ENCODE measurements at regions of chr6 and their contacts with region 1.

Region 1: DNA sequence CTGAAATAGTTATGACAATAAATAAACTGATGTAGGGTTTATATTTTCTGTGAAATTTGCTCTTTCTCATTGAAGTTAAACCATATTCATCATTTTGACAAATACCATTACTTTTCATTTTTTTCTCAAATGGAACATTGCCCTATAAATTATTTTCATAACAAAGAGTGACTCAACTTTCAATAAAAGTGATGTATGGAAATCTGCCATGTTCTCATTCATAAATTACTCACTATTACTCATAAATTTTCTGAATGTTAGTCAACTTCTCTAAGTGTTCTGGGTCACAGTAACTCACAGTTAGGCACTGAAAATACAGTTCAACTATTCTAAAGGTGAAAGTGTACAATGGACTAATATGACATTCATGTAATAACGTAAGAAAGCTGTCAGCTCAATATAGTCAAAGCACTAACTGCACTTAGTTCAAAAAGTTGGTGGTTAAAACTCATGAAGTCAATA is 19.0 kb upstream of the STX11 start:
- DNase-seq: no peak
- H3K4me3 Mint-ChIP-seq: peak overlapping the region; percentile 59
- H3K27ac Mint-ChIP-seq: peak overlapping the region; percentile 74
- H3K4me1 Mint-ChIP-seq: peaks cover 31% of the 10 kb centered on the region
- H3K27me3 Mint-ChIP-seq: peaks cover 3% of the 10 kb centered on the region

Region 2: DNA sequence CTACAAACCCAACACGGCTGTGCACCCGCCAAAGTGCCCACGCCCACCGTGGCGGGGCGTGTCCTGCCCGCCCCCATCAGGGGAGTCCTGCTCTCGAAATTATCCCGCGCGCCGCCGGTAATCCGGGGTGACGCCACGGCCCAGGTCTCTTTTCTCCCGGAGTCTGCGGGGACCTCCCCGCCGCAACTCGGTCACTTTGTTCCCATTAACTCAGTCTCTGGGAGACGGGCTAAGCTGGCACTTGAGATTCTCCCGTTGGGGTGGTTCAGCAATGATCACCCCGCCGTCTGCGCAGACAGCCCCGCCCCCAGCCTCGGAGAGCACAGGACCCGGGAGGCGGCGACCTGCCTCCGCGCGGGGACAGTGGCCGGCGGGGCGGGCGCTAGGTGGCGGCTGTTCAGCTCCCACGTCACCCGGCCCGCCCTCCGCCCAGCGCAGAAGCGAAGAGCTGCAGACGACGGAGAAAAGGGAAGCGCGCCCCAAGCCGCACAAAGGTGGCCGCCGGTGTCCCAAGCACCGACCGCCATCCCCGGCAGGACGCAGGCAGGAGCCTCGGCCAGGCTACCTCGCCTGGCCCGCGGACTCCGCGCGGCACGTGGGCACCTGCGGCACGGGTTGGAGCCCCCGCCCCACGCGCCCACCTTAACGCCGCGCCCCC is 67.4 kb before region 1 on chr6:
- CTCF ChIA-PET with region 1: no interaction called
- POLR2A ChIA-PET with region 1: no interaction called
- intact Hi-C with region 1: loop called (anchors 1 kb)
- DNase-seq: peak; percentile 91
- H3K4me3 Mint-ChIP-seq: peak overlapping the region; percentile 82
- H3K27ac Mint-ChIP-seq: peak overlapping the region; percentile 67
- H3K4me1 Mint-ChIP-seq: peaks cover 43% of the 10 kb centered on the region
- H3K27me3 Mint-ChIP-seq: no peaks in the 10 kb centered on the region

Region 3: GRCh38 chr6:144104898-144105487 is 26.3 kb before region 1 on chr6:
- CTCF ChIA-PET with region 1: interaction called, 3 read pairs
- POLR2A ChIA-PET with region 1: no interaction called
- intact Hi-C with region 1: loop called (anchors 1 kb)
- DNase-seq: no peak
- H3K4me3 Mint-ChIP-seq: no peak overlapping the region
- H3K27ac Mint-ChIP-seq: peak overlapping the region; percentile 53
- H3K4me1 Mint-ChIP-seq: peaks cover 7% of the 10 kb centered on the region
- H3K27me3 Mint-ChIP-seq: no peaks in the 10 kb centered on the region

Region 4: DNA sequence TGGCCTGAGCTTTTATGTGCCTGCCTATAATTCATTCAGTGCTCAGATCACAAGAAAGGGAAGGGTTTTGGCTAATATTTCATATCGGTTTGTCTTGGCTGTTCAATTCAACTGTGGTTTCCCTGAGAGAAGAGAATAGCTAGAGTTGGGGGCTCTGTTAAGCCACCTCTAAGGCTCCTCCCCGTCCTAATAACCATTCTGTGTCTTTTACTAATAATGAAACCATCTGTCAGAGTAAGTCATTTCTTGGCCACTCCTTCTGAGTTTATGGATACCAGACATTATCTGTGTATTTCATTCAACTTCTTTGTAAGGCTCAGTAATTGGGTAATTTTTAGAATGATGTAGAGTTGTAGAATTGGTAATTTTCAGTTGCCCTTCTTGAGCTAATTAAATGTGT is 24.2 kb after region 1 on chr6:
- CTCF ChIA-PET with region 1: interaction called, 3 read pairs
- POLR2A ChIA-PET with region 1: interaction called, 6 read pairs
- intact Hi-C with region 1: loop called (anchors 1 kb)
- DNase-seq: no peak
- H3K4me3 Mint-ChIP-seq: no peak overlapping the region
- H3K27ac Mint-ChIP-seq: no peak overlapping the region
- H3K4me1 Mint-ChIP-seq: peaks cover 54% of the 10 kb centered on the region
- H3K27me3 Mint-ChIP-seq: no peaks in the 10 kb centered on the region

Region 5: DNA sequence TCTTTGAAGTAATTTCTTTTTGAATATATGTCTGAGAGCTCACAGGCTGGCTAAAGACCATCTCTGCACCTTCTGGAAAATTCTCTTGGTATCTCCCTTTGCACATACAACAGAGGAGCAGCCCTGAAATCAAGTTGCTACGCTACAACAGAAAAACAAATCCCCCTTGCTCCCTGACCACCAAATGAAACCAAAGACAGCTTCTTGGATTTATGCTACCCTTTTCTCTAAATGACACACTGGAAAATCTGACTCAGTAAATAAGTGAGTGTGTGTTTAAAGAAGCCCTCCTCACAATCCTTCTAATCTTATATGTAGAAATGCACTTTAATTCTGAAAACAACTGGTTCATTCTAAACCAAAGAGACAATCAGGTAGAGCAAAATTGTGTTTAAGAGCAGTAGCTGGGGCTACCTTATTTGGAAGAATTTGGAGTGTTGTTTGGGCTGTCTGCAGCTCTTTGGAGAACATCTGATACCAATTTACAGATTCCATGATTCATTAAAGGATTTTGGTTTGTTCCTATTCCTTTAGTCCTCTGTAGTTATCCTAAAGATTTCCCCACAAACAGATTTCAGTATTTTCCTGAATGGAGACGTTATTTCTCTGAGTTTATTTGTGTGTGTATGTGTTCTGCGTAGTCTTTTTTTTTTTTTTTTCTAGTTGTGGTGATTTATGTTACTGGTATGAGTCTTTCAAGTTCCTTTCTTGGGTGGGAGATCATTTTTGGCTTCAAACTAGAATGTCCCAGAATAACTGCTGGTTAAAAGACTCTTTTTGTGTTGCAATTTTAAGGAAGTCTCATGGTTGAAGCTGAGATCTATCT is 117.4 kb after region 1 on chr6:
- CTCF ChIA-PET with region 1: no interaction called
- POLR2A ChIA-PET with region 1: interaction called, 5 read pairs
- intact Hi-C with region 1: loop called (anchors 1 kb)
- DNase-seq: peak; percentile 29
- H3K4me3 Mint-ChIP-seq: peak overlapping the region; percentile 21
- H3K27ac Mint-ChIP-seq: peak overlapping the region; percentile 71
- H3K4me1 Mint-ChIP-seq: peaks cover 18% of the 10 kb centered on the region
- H3K27me3 Mint-ChIP-seq: peaks cover 22% of the 10 kb centered on the region

Region 6: DNA sequence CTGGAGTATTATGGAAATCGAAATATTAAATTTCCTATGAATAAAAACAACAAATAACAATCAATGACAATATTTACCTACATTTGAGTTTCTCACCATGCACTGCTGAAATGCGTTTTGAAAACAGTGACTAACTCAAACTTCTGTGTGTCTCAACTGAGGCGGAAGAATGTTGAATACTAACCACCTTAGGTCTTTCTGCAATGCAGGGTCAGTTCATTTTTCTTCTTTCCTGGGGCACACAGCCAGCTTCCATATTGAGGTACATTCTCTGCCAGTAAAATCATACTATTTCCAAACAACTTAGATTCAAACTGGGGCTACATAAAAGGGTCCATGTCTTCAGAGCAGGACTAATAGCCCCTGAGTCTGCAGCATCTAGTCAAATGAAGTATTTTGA is 464.0 kb after region 1 on chr6:
- CTCF ChIA-PET with region 1: no interaction called
- POLR2A ChIA-PET with region 1: no interaction called
- intact Hi-C with region 1: loop called (anchors 2 kb)
- DNase-seq: no peak
- H3K4me3 Mint-ChIP-seq: no peak overlapping the region
- H3K27ac Mint-ChIP-seq: no peak overlapping the region
- H3K4me1 Mint-ChIP-seq: peaks cover 18% of the 10 kb centered on the region
- H3K27me3 Mint-ChIP-seq: no peaks in the 10 kb centered on the region

Measured in activated CD4-positive, alpha-beta memory T cell treated with anti-CD3 and anti-CD28 coated beads for 36 hours (primary cell).